GM12878 (cell line): ENCODE measurements at regions of chr9 and their contacts with region 1.

Region 1: GRCh38 chr9:2321523-2322151 is 299.9 kb upstream of the VLDLR start:
- DNase-seq: no peak
- ATAC-seq: no peak
- H3K4me3 ChIP-seq: no peak overlapping the region
- H3K27ac ChIP-seq: no peak overlapping the region
- H3K4me1 ChIP-seq: no peaks in the 10 kb centered on the region
- H3K27me3 ChIP-seq: no peaks in the 10 kb centered on the region
- CTCF ChIP-seq: no peak; a peak in 1 of 6 replicates
- EP300 ChIP-seq: no peak
- POLR2A ChIP-seq: no peak
- RAD21 ChIP-seq: no peak

Region 2: GRCh38 chr9:2281031-2281802 is 40.4 kb before region 1 on chr9:
- CTCF ChIA-PET with region 1: no interaction called
- POLR2A ChIA-PET with region 1: no interaction called
- RAD21 ChIA-PET with region 1: no interaction called
- SMC1A ChIA-PET with region 1: no interaction called
- in situ Hi-C with region 1: no loop called
- intact Hi-C with region 1: no loop called
- DNase-seq: no peak
- ATAC-seq: no peak
- H3K4me3 ChIP-seq: no peak overlapping the region
- H3K27ac ChIP-seq: no peak overlapping the region
- H3K4me1 ChIP-seq: no peaks in the 10 kb centered on the region
- H3K27me3 ChIP-seq: no peaks in the 10 kb centered on the region
- CTCF ChIP-seq: no peak
- EP300 ChIP-seq: no peak
- POLR2A ChIP-seq: no peak
- RAD21 ChIP-seq: no peak

Region 3: DNA sequence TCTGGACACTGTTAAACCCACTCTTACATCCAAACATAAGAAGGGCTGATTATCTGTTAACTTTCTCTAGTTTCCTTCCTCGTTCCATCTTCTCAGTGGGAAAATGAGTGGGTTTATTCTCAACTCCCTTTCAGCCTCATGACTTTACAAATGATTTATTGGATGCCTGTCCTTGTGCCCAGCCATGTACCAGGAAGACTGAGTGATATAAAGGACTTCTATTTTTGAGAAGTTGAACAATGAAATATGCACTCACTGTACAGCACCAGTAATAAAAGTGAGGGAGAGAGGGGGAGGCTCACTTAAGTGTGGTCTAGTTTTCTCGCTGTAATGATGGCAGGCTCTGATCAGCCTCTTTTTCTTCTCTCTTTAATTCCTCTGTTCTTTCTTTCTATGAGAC is 28.9 kb before region 1 on chr9:
- CTCF ChIA-PET with region 1: no interaction called
- POLR2A ChIA-PET with region 1: no interaction called
- RAD21 ChIA-PET with region 1: no interaction called
- SMC1A ChIA-PET with region 1: no interaction called
- in situ Hi-C with region 1: no loop called
- intact Hi-C with region 1: loop called (anchors 1 kb)
- DNase-seq: no peak
- ATAC-seq: no peak
- H3K4me3 ChIP-seq: no peak overlapping the region
- H3K27ac ChIP-seq: no peak overlapping the region
- H3K4me1 ChIP-seq: no peaks in the 10 kb centered on the region
- H3K27me3 ChIP-seq: peaks cover 0 to 2% of the 10 kb centered on the region in 2 experiments; a peak in 1 of 4 replicates
- CTCF ChIP-seq: no peak
- EP300 ChIP-seq: no peak
- POLR2A ChIP-seq: no peak
- RAD21 ChIP-seq: no peak